ENCODE measurements at regions of chr6 and their contacts with region 1.

Region 1: GRCh38 chr6:17653198-17653882 is 53.2 kb downstream of the FAM8A1 start:
- DNase-seq: no peak
- ATAC-seq: peak; percentile 87
- H3K4me3 Mint-ChIP-seq: no peak overlapping the region
- H3K27ac Mint-ChIP-seq: peak overlapping the region; percentile 66
- H3K4me1 Mint-ChIP-seq: peaks cover 19% of the 10 kb centered on the region
- H3K27me3 Mint-ChIP-seq: no peaks in the 10 kb centered on the region

Region 2: DNA sequence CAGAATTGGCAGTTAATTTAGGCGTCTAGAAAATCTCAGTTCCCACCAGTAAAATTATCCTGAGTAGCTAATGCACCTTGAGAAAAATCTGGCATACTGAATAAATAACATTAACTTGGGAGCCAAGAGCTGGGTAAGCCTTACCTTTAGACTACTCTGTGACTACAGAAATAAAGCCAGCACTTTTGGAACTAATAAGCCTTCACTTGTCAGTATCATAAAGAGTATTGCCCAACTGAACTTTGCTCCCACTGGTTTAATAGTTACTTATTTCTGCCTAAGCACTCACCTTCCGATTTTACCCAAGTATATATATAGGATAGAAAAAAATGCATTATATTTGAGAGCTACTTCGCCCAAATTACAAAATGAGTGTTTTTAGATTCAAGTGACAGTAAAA is 42.5 kb before region 1 on chr6:
- CTCF ChIA-PET with region 1: no interaction called
- POLR2A ChIA-PET with region 1: no interaction called
- intact Hi-C with region 1: loop called in 1 of 2 experiments (anchors 5 kb)
- DNase-seq: no peak
- ATAC-seq: no peak
- H3K4me3 Mint-ChIP-seq: no peak overlapping the region
- H3K27ac Mint-ChIP-seq: no peak overlapping the region
- H3K4me1 Mint-ChIP-seq: peaks cover 3% of the 10 kb centered on the region
- H3K27me3 Mint-ChIP-seq: no peaks in the 10 kb centered on the region

Region 3: DNA sequence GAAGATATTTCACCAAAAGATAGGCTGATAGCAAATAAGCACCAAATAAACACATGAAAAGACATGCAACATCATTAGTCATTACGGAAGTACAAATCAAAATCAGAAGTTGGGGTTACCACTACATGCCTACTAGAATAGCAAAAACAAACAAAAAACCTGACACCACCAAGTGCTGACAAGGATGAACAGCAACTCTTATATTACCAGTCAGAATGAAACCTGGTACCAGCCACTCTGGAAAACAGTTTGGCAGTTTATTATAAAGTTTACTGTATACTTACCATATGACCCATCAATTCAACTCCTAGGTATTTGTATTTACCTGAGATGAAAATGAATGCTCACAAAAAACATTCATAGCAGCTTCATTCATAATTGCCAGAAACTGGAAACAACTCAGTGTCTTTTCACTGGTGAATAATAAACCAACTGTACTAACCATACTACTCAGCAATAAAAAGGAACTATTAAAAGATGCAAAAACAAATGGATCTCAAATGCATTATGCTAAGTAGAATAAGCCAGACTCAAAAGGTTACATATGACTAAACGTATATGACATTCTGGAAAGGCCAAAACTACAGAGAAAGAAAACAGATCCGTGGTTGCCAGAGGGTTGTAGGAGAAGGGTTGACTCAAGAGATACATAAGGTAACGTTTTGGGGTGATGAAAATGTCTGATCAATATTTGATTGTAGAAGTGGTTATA is 20.4 kb after region 1 on chr6:
- CTCF ChIA-PET with region 1: interaction called, 4 read pairs
- POLR2A ChIA-PET with region 1: interaction called, 6 read pairs
- intact Hi-C with region 1: loop called in 1 of 2 experiments (anchors 1 kb)
- DNase-seq: peak; percentile 30
- ATAC-seq: peak; percentile 89
- H3K4me3 Mint-ChIP-seq: no peak overlapping the region
- H3K27ac Mint-ChIP-seq: peak overlapping the region; percentile 63
- H3K4me1 Mint-ChIP-seq: peaks cover 32% of the 10 kb centered on the region
- H3K27me3 Mint-ChIP-seq: no peaks in the 10 kb centered on the region